ENCODE measurements at regions of chr16 and their contacts with region 1.

Region 1: DNA sequence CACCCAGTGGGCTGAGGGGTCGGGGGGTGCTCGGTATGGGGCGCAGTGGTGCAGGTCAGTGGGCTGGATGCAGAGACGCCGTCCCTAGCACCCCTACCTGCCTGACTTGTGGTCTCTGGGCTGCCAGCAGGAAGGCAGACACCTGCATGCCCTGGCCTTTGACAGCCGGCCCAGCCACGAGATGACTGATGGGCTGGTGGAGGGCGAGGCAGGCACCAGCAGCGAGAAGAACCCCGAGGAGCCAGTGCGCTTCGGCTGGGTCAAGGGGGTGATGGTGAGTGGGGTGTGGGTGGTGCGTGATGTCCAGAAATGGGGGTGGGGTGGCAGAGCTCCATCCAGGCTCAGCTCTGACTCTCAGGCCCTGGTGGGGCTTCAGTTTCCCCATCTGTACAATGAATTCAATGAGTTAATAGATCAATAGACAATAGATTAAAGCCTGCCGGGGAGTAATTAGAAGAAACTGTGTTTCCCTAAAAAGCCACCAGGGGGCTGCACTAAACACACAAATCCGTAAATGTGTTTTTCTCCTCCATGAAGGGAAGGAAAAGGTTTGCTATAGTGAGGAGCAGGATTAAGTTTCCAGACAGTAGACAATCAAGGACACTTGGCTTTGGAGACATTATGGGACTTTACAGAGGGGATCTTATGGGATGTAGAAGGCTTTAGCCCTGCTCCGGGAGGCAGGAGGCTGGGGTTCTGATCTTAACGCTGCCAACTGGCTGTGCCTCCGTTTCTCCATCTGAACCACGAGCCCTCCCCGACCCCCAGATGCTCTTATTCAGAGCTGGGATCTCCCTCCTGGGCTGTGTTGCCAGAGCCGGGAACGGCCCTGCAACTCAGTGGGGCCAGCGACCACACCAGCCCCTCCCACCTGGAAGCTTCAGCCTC is 2.2 kb downstream of the SLC12A3 start:
- DNase-seq: no peak
- H3K4me3 ChIP-seq: no peak overlapping the region
- H3K27me3 ChIP-seq: no peaks in the 10 kb centered on the region
- CTCF ChIP-seq: peak; percentile 66

Region 2: GRCh38 chr16:56789360-56789759 is 77.8 kb before region 1 on chr16:
- CTCF ChIA-PET with region 1: interaction called, 14 read pairs
- POLR2A ChIA-PET with region 1: no interaction called
- DNase-seq: no peak
- H3K4me3 ChIP-seq: no peak overlapping the region
- H3K27me3 ChIP-seq: no peaks in the 10 kb centered on the region
- CTCF ChIP-seq: peak; percentile 58

Region 3: DNA sequence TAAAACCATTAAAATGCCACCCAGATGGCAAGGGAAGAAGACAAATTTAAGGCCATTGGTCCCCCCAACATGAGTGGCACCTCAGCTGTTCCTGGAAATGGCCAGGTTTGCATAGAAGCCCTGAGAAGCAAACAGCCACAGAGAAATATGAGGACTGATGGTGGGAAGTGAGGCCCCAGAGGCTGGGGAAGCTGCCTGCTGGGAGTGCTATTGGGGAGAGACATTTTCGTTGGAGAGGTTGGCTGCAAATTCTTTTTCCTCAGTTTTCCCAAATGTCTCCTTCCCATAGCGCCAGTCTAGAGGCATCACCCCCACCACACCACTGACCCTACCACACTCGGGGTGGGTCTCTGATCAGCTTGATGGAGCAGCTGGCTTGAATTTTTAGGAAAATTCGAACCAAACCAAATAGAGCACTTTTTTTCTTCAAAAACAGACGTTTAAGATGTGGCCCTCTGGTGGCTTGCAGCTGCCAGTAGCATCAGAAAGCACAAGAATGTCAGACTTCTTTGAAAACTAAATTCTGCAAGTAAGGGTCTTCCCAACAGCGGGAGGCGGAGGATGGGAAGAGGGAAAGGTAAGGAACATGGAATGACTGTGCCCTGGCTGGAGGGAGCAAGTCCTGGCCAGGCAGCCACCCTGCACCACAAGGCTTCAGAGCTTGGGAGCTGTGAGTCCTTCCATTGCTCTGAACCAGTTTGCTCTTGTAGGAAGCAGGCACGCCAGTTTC is 15.4 kb before region 1 on chr16:
- CTCF ChIA-PET with region 1: interaction called, 20 read pairs
- POLR2A ChIA-PET with region 1: no interaction called
- DNase-seq: no peak
- H3K4me3 ChIP-seq: no peak overlapping the region
- H3K27me3 ChIP-seq: no peaks in the 10 kb centered on the region
- CTCF ChIP-seq: peak; percentile 66

Region 4: GRCh38 chr16:56856876-56857447 is 10.2 kb before region 1 on chr16:
- CTCF ChIA-PET with region 1: interaction called, 20 read pairs
- POLR2A ChIA-PET with region 1: no interaction called
- DNase-seq: no peak
- H3K4me3 ChIP-seq: no peak overlapping the region
- H3K27me3 ChIP-seq: no peaks in the 10 kb centered on the region
- CTCF ChIP-seq: no peak

Region 5: GRCh38 chr16:56950881-56951771 is 83.9 kb after region 1 on chr16:
- CTCF ChIA-PET with region 1: interaction called, 83 read pairs
- POLR2A ChIA-PET with region 1: no interaction called
- DNase-seq: no peak
- H3K4me3 ChIP-seq: no peak overlapping the region
- H3K27me3 ChIP-seq: no peaks in the 10 kb centered on the region
- CTCF ChIP-seq: peak; percentile 86

Region 6: DNA sequence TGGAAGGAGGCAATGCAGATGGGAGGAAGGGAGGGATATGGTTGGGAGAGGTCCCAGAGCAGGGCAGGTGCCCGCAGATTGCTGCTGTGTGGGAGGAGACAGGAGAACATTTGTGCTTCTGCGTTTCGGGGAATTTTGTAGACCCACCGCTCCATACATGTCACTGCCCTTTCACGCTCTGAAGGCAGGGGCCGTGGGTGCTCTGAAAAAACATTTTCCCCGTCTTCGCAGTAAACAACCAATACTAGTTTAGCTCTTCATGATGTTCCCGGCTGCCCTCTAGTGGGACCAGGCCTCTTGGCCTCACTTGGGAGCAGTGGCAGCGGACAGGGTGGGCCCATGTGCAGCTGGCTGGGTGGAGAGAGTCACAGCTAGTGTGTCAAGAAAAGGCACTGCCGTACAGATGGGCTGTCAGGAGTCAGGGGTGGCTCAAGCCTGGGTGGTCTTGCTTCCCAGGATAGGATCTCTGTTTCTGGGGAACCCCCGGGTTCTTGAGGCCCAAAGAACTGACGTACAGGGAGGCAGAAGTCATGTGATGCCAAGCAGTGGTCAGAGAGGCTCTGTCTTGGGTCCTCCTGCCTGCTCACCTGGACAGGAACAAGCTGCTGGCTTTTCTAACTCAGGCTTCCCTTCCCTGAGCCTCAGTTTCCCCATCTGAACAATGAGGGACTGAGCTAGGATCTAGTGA is 178.7 kb after region 1 on chr16:
- CTCF ChIA-PET with region 1: interaction called, 18 read pairs
- POLR2A ChIA-PET with region 1: no interaction called
- DNase-seq: no peak
- H3K4me3 ChIP-seq: no peak overlapping the region
- H3K27me3 ChIP-seq: no peaks in the 10 kb centered on the region
- CTCF ChIP-seq: peak; percentile 83

Region 7: GRCh38 chr16:57147381-57148221 is 280.4 kb after region 1 on chr16:
- CTCF ChIA-PET with region 1: no interaction called
- POLR2A ChIA-PET with region 1: interaction called, 12 read pairs
- DNase-seq: peak; percentile 67
- H3K4me3 ChIP-seq: no peak overlapping the region
- H3K27me3 ChIP-seq: no peaks in the 10 kb centered on the region
- CTCF ChIP-seq: no peak